Naive thymus-derived CD4-positive, alpha-beta T cell (primary cell): ENCODE measurements at regions of chr3 and their contacts with region 1.

Region 1: GRCh38 chr3:61561374-61562041 is at the start of gene PTPRG:
- DNase-seq: peak in 1 of 9 donors; percentile 68
- ATAC-seq: no peak
- H3K4me3 ChIP-seq: no peak within 1 kb of the TSS
- H3K4me3 Mint-ChIP-seq: peak within 1 kb of the TSS; percentile 27 to 93 (median 72)
- H3K27ac ChIP-seq: no peak within 1 kb of the TSS
- H3K27ac Mint-ChIP-seq: peak within 1 kb of the TSS in 1 of 9 donors; percentile 68
- H3K4me1 ChIP-seq: no peaks in the 10 kb centered on the region
- H3K4me1 Mint-ChIP-seq: peaks cover 0 to 25% (median 15%) of the 10 kb centered on the region in 7 donors
- H3K27me3 ChIP-seq: peaks cover 0 to 3% of the 10 kb centered on the region in 2 donors
- H3K27me3 Mint-ChIP-seq: peaks cover 68 to 77% (median 72%) of the 10 kb centered on the region in 5 donors
- total RNA-seq, gene PTPRG: 0.17 to 1.7 TPM in 2 of 5 experiments, not detected in the others

Region 2: DNA sequence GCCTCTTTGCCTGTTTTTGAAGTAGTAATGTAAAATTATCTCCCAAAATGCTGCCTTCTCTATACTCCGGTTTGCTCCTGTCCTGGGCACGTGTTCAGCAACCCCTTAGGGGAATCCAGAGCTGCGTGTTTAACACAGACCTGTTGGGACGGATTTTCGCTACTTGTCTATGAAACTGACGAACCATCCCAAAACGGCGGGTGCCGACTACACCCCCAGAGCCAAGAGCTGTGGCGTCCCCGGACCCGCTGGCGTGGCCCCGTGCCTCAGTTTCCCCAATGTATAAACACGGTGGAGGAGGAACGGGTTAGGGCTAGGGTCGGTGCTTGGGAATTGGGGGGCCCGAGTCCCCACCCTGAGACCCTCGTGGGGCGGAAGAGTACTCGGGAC is 310.7 kb before region 1 on chr3:
- CTCF ChIA-PET with region 1: no interaction called
- POLR2A ChIA-PET with region 1: no interaction called
- intact Hi-C with region 1: no loop called
- DNase-seq: peak in 3 of 9 donors; percentile 12 to 21 (median 20)
- ATAC-seq: no peak
- H3K4me3 ChIP-seq: peak overlapping the region; percentile 83
- H3K4me3 Mint-ChIP-seq: peak overlapping the region; percentile 83 to 94 (median 92)
- H3K27ac ChIP-seq: peak overlapping the region; percentile 80
- H3K27ac Mint-ChIP-seq: peak overlapping the region; percentile 51 to 95 (median 84)
- H3K4me1 ChIP-seq: peaks cover 11 to 13% of the 10 kb centered on the region in 2 donors
- H3K4me1 Mint-ChIP-seq: peaks cover 10 to 27% (median 25%) of the 10 kb centered on the region in 7 donors
- H3K27me3 ChIP-seq: no peaks in the 10 kb centered on the region
- H3K27me3 Mint-ChIP-seq: peaks cover 0 to 9% (median 3%) of the 10 kb centered on the region in 5 donors

Region 3: GRCh38 chr3:61520966-61521628 is 40.4 kb before region 1 on chr3:
- CTCF ChIA-PET with region 1: no interaction called
- POLR2A ChIA-PET with region 1: no interaction called
- intact Hi-C with region 1: loop called in 1 of 2 experiments (anchors 2 kb)
- DNase-seq: peak in 1 of 9 donors; percentile 59
- ATAC-seq: no peak
- H3K4me3 ChIP-seq: no peak overlapping the region
- H3K4me3 Mint-ChIP-seq: peak overlapping the region in 1 of 10 donors; percentile 58
- H3K27ac ChIP-seq: no peak overlapping the region
- H3K27ac Mint-ChIP-seq: peak overlapping the region in 1 of 9 donors; percentile 70
- H3K4me1 ChIP-seq: no peaks in the 10 kb centered on the region
- H3K4me1 Mint-ChIP-seq: peaks cover 0 to 37% (median 0%) of the 10 kb centered on the region in 7 donors
- H3K27me3 ChIP-seq: no peaks in the 10 kb centered on the region
- H3K27me3 Mint-ChIP-seq: peaks cover 0 to 15% (median 0%) of the 10 kb centered on the region in 5 donors